HepG2 (cell line): ENCODE measurements at regions of chr12 and their contacts with region 1.

Region 1: DNA sequence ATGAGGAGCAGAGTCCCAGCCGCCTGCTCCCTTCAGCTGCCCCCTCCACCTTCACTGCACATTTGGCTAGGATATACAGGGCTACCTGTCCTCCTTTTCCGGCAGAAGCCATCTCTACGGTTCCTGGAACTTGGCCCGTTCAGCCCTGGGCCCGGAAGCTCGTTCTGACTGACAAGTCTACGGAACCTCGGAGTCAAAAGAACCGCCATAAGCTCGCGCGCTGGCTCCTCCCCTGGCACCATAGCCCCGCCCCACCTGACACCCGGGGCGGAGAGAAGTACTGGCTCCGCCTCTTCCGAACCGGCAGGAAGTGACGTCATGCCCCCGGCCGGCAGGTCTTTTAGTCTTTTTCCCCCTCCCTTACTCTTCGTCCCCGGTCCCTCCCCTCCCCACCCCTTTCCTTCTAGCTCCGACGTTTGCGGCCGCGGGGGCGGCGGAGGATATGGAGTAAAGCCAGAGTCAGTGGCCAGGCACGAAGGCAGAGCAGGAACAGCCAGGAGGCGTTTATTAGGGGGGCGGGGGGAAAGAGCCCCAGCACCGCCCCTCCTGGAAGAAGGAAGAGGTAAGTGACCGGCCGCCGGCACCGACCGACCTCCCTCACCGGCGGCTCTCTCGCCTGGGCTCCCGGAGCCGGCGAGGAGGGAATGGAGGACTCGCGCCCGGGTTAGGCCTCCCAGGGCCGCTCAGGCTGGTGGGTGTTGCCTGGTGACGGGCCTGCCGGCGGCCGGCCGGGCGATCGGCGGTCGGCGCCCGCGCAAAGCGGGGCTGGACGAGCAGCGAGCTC is at the starts of genes DEPDC4 and SCYL2:
- DNase-seq: peak; percentile 88
- ATAC-seq: peak; percentile 88
- H3K4me3 ChIP-seq: peak within 1 kb of the TSS; percentile 91 to 93 (median 92)
- H3K27ac ChIP-seq: peak within 1 kb of the TSS; percentile 91
- H3K4me1 ChIP-seq: peaks cover 40% of the 10 kb centered on the region
- H3K27me3 ChIP-seq: no peaks in the 10 kb centered on the region; a peak in 1 of 5 replicates
- CTCF ChIP-seq: 0 out of 2 replicates have a peak, but pooled peaks have one; percentile 3
- EP300 ChIP-seq: no peak
- POLR2A ChIP-seq: peak; percentile 63 to 72
- RAD21 ChIP-seq: 0 out of 2 replicates have a peak, but pooled peaks have one; percentile 41
- total RNA-seq, gene DEPDC4: 5.7 and 6.6 TPM in 2 replicates
- total RNA-seq, gene SCYL2: 28.8 and 41.9 TPM in 2 replicates

Region 2: GRCh38 chr12:100142851-100143559 is 124.0 kb before region 1 on chr12 and contains the start of gene BLTP3B:
- CTCF ChIA-PET with region 1: no interaction called
- POLR2A ChIA-PET with region 1: no interaction called
- in situ Hi-C with region 1: no loop called
- intact Hi-C with region 1: loop called (anchors 5 kb)
- DNase-seq: peak; percentile 62
- ATAC-seq: peak; percentile 91
- H3K4me3 ChIP-seq: peak within 1 kb of the TSS; percentile 96 to 99 (median 97)
- H3K27ac ChIP-seq: peak within 1 kb of the TSS; percentile 99
- H3K4me1 ChIP-seq: peaks cover 67% of the 10 kb centered on the region
- H3K27me3 ChIP-seq: no peaks in the 10 kb centered on the region; a peak in 1 of 5 replicates
- CTCF ChIP-seq: no peak
- EP300 ChIP-seq: no peak
- POLR2A ChIP-seq: peak; percentile 42 to 58; a peak in 3 of 4 replicates
- RAD21 ChIP-seq: no peak
- total RNA-seq, gene BLTP3B: 24.4 and 35.3 TPM in 2 replicates

Region 3: DNA sequence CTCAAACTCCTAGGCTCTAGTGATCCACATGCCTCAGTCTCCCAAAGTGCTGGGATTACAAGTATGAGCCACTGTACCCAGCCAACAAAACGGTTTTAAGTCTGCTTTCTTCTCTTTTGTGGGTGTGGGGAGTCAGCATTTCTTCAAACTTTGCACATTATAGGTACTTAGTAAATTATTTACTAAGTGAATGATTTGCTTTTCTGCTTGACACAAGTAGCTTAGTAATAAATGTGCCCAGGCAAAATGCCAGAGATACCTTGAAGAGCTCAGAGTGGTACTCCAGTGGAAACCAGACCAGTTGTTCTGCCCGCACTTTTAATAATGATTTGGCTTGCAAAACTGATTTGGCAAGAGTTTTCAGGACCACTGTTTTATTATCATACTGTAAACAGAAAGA is 15.1 kb before region 1 on chr12:
- CTCF ChIA-PET with region 1: no interaction called
- POLR2A ChIA-PET with region 1: interaction called, 16 read pairs
- in situ Hi-C with region 1: no loop called
- intact Hi-C with region 1: no loop called
- DNase-seq: peak; percentile 83
- ATAC-seq: peak; percentile 97
- H3K4me3 ChIP-seq: no peak overlapping the region
- H3K27ac ChIP-seq: no peak overlapping the region
- H3K4me1 ChIP-seq: peaks cover 24% of the 10 kb centered on the region
- H3K27me3 ChIP-seq: no peaks in the 10 kb centered on the region
- CTCF ChIP-seq: no peak
- EP300 ChIP-seq: no peak
- POLR2A ChIP-seq: no peak
- RAD21 ChIP-seq: no peak

Region 4: GRCh38 chr12:100302081-100302480 is 35.1 kb after region 1 on chr12:
- CTCF ChIA-PET with region 1: no interaction called
- POLR2A ChIA-PET with region 1: no interaction called
- in situ Hi-C with region 1: no loop called
- intact Hi-C with region 1: no loop called
- DNase-seq: no peak
- ATAC-seq: no peak
- H3K4me3 ChIP-seq: no peak overlapping the region
- H3K27ac ChIP-seq: no peak overlapping the region
- H3K4me1 ChIP-seq: no peaks in the 10 kb centered on the region
- H3K27me3 ChIP-seq: no peaks in the 10 kb centered on the region
- CTCF ChIP-seq: no peak
- EP300 ChIP-seq: no peak
- POLR2A ChIP-seq: no peak
- RAD21 ChIP-seq: no peak

Region 5: DNA sequence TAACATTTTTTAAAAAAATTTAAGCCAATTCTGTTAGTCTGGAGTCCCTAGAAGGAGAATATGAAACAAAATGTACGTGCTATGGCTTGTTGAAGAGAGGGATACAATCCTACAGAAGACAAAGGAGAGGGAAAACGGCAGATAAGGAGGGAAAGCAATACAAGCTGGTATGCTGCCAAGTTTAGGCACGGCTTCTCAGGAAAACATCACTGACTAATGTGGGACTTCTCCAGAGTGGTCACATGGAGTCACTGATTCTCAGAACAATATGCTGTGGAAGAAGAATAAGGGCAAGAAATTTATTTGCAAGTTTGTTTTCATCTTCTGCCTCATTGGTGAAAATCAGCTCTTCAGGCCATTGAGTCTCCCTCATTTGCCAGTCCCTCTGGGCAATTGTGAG is 183.7 kb after region 1 on chr12:
- CTCF ChIA-PET with region 1: no interaction called
- POLR2A ChIA-PET with region 1: no interaction called
- in situ Hi-C with region 1: no loop called
- intact Hi-C with region 1: no loop called
- DNase-seq: no peak
- ATAC-seq: no peak
- H3K4me3 ChIP-seq: no peak overlapping the region
- H3K27ac ChIP-seq: no peak overlapping the region
- H3K4me1 ChIP-seq: peaks cover 18% of the 10 kb centered on the region
- H3K27me3 ChIP-seq: no peaks in the 10 kb centered on the region
- CTCF ChIP-seq: no peak
- EP300 ChIP-seq: no peak
- POLR2A ChIP-seq: no peak
- RAD21 ChIP-seq: no peak